Left lung (tissue), 14 donors: ENCODE measurements at regions of chr17 and their contacts with region 1.

Region 1: GRCh38 chr17:77208217-77208808 is 67.5 kb downstream of the SEC14L1 start:
- DNase-seq: peak in 1 of 4 donors; percentile 55
- ATAC-seq: peak; percentile 60
- H3K4me3 ChIP-seq: no peak overlapping the region
- H3K27ac ChIP-seq: peak overlapping the region; percentile 35 to 57
- H3K4me1 ChIP-seq: peaks cover 0 to 52% of the 10 kb centered on the region in 2 donors
- H3K27me3 ChIP-seq: no peaks in the 10 kb centered on the region
- CTCF ChIP-seq: no peak

Region 2: GRCh38 chr17:77127735-77128361 is 80.5 kb before region 1 on chr17:
- intact Hi-C with region 1: no loop called
- DNase-seq: peak in 2 of 4 donors; percentile 77 to 86
- ATAC-seq: peak; percentile 61
- H3K4me3 ChIP-seq: peak overlapping the region in 1 of 2 donors; percentile 21
- H3K27ac ChIP-seq: peak overlapping the region; percentile 79 to 91
- H3K4me1 ChIP-seq: peaks cover 15 to 66% of the 10 kb centered on the region in 2 donors
- H3K27me3 ChIP-seq: no peaks in the 10 kb centered on the region
- CTCF ChIP-seq: no peak

Region 3: GRCh38 chr17:77140166-77140878 is 68.0 kb before region 1 on chr17:
- intact Hi-C with region 1: loop called in 1 of 2 experiments (anchors 10 kb)
- DNase-seq: peak; percentile 99 to 100 (median 100)
- ATAC-seq: peak; percentile 98
- H3K4me3 ChIP-seq: peak overlapping the region; percentile 29 to 78
- H3K27ac ChIP-seq: peak overlapping the region; percentile 93 to 99
- H3K4me1 ChIP-seq: peaks cover 5 to 70% of the 10 kb centered on the region in 2 donors
- H3K27me3 ChIP-seq: no peaks in the 10 kb centered on the region
- CTCF ChIP-seq: peak in 1 of 2 donors; percentile 20

Region 4: DNA sequence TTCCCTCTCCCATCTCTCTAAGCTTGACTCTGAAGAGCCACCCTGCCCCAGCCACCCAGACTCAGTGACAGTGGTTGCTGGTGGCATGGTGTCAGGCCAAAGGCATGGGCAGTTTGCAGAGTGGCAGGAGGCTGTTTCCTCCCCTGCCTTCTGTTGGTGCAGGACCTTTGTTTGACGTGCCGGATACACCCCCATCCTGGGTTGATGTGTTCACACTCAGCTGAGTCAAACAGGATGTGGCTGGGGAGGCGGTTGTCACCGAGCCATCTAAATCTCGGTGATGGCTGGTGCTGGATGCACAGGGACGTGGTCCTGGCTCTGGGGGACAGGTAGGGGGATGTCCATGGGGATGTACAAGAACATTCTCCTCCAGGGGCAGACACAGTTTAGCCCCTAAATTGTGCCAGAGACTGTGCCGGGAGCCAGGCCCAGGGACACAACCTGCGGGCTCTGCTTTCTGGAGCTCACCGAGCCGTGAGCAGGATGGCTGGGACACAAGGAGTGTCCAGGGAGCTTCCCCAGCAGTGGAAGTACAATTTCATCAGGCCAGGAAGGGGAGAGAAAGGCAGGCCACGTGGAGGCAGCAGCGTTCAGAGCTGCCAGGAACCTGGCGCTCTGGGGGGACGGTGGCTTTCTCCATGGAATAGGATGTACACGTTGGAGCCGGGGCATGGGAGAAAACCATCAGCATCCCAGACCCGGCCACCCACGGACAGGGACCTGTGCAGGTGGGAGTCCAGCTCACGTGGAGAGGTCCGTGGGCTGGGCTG is 196.7 kb after region 1 on chr17:
- intact Hi-C with region 1: no loop called
- DNase-seq: peak in 1 of 4 donors; percentile 75
- ATAC-seq: peak; percentile 45
- H3K4me3 ChIP-seq: peak overlapping the region in 1 of 2 donors; percentile 16
- H3K27ac ChIP-seq: peak overlapping the region; percentile 27 to 42
- H3K4me1 ChIP-seq: peaks cover 24 to 78% of the 10 kb centered on the region in 2 donors
- H3K27me3 ChIP-seq: no peaks in the 10 kb centered on the region
- CTCF ChIP-seq: no peak